ENCODE measurements at regions of chr7 and their contacts with region 1.

Region 1: DNA sequence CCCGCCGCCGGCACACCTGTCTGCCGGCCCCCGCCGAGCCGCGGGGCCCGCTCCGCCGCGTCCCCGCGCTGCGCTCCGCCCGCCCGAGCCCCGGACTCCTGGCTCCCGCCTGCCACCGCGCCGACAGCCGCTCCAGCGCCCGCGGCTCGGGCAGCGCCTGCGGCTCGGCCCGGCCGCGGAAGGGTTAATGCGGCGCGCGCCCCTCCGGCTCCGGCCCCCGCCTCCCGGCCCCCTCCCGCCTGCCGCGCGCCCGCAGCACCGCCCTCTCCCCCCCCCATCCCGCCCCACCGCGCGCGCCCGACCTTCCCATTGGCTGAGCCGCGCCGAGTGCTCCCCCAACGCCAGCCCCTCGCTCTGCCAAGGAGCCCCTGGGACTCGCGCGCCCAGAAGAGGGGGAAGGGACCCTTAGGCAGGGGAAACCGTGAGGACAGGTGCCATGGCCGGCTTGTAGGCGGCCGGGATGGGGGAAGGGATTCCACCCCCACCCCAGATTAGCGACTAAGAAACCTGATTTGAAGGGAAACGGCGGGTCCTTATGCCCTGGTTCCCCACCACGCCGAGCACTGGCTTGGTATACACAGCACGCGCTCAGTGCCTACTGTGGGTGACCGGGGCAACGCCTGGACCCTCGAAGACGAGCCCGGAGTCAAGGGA is at the start of gene KCNH2:
- DNase-seq: no peak
- total RNA-seq, gene KCNH2: 61.9 TPM

Region 2: GRCh38 chr7:150962553-150963399 is 15.5 kb before region 1 on chr7:
- intact Hi-C with region 1: loop called (anchors 2 kb)
- DNase-seq: no peak

Measured in cardiac septum (tissue), 1 donor.